ENCODE measurements at regions of chr1 and their contacts with region 1.

Region 1: GRCh38 chr1:63691701-63692425 is 82.0 kb upstream of the ROR1 start:
- DNase-seq: peak; percentile 43
- ATAC-seq: no peak
- H3K4me3 Mint-ChIP-seq: no peak overlapping the region
- H3K27ac Mint-ChIP-seq: no peak overlapping the region
- H3K4me1 Mint-ChIP-seq: no peaks in the 10 kb centered on the region
- H3K27me3 Mint-ChIP-seq: peaks cover 3% of the 10 kb centered on the region

Region 2: DNA sequence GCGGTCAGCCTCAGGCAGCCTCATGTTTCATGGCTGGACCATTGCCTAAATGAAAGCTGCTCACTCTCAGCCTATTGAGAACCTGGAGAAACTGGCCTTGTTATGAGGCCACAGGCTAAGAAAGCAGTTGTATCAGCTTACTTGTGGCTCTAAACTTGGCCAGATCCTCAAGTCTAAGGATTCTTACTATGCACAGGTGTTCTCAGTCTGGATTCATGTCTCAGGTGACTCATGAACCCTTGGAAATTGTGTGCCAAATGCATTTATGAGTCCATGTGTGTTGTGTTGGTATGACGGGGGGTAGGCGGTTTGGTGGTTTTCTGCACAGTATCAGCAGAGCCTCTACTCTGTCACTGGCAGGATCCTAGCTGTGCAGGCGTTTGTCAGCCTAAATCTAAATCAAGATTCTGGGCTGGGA is 172.4 kb after region 1 on chr1:
- CTCF ChIA-PET with region 1: no interaction called
- DNase-seq: no peak
- ATAC-seq: no peak
- H3K4me3 Mint-ChIP-seq: no peak overlapping the region
- H3K27ac Mint-ChIP-seq: no peak overlapping the region
- H3K4me1 Mint-ChIP-seq: no peaks in the 10 kb centered on the region
- H3K27me3 Mint-ChIP-seq: peaks cover 3% of the 10 kb centered on the region

Region 3: DNA sequence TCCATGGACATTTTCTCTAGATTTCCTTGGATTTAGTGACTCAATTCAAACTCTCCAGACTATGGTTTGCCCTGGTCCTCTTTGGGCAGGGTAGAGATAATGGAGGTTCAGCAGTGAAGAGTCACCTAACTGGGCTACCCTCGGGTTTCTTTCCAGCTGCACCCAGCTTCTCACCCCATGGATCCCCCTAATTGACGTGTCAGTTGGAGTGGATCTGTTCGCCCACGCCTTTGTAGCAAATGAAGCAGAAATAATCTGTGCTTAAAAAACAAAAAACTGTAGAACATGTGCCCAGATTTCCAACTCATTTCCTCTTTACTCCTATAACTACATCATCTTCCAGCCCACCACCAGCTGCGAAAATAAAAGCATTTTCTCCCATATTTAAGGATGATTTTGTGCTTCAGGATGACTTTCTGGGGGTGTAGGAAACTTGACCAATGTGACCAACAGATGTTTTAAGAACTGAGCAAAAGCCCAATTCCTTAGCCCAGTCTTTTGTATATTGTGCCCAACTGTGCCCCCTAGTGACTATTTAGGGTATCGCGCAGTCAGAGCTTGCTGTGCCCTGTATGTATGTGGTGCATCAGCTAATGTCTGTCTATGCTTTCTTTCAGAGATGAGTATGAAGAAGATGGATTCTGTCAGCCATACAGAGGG is 445.0 kb after region 1 on chr1:
- CTCF ChIA-PET with region 1: interaction called, 18 read pairs
- DNase-seq: peak; percentile 71
- ATAC-seq: peak; percentile 55
- H3K4me3 Mint-ChIP-seq: no peak overlapping the region
- H3K27ac Mint-ChIP-seq: no peak overlapping the region
- H3K4me1 Mint-ChIP-seq: no peaks in the 10 kb centered on the region
- H3K27me3 Mint-ChIP-seq: peaks cover 8% of the 10 kb centered on the region

Region 4: GRCh38 chr1:64246294-64246917 is 554.5 kb after region 1 on chr1:
- CTCF ChIA-PET with region 1: interaction called, 11 read pairs
- DNase-seq: no peak
- ATAC-seq: no peak
- H3K4me3 Mint-ChIP-seq: no peak overlapping the region
- H3K27ac Mint-ChIP-seq: no peak overlapping the region
- H3K4me1 Mint-ChIP-seq: peaks cover 7% of the 10 kb centered on the region
- H3K27me3 Mint-ChIP-seq: peaks cover 23% of the 10 kb centered on the region

Measured in activated CD8-positive, alpha-beta memory T cell treated with anti-CD3 and anti-CD28 coated beads, Interleukin-2, amount 10 ng/mL, durations not matched to agents 7 days and 5 days (primary cell).